ENCODE measurements at regions of chr4 and their contacts with region 1.

Region 1: DNA sequence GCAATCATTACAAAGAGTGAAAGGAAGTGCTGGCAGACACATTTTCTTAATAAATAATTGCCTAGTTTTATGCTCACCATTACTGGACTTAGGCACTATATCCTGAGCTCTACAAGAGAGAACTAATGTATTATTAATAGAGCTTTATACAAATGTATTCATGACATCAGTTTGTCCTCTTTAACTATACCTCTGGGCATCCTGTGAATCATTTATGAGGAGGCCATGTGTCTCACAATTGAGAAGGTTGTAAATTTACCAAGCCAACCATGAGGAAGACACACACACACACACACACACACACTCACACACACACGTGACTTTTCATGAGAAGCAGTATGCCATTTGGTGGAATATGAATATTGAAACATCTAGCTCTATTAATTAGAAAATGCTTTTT is 728.2 kb downstream of the ARAP2 start:
- DNase-seq: no peak
- H3K4me3 ChIP-seq: no peak overlapping the region
- CTCF ChIP-seq: no peak
- POLR2A ChIP-seq: no peak

Region 2: DNA sequence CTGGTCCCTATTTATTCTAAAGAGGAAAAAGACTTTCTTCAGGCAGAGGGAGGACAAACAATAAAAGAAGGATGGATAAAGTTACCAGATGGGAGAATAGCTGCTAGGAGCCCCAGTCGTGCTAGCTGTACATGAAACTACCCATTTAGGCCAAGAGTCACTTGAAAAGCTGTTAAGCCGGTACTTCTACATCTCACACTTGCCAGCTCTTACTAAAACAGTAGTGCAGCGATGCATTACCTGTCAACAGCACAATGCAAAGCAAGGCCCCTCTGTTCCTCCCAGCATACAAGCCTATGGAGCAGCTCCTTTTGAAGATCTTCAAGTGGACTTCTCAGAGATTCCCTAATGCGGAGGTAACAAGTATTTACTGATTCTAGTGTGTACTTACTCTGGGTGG is 410.6 kb before region 1 on chr4:
- intact Hi-C with region 1: no loop called
- DNase-seq: no peak
- H3K4me3 ChIP-seq: no peak overlapping the region
- CTCF ChIP-seq: no peak
- POLR2A ChIP-seq: no peak

Region 3: DNA sequence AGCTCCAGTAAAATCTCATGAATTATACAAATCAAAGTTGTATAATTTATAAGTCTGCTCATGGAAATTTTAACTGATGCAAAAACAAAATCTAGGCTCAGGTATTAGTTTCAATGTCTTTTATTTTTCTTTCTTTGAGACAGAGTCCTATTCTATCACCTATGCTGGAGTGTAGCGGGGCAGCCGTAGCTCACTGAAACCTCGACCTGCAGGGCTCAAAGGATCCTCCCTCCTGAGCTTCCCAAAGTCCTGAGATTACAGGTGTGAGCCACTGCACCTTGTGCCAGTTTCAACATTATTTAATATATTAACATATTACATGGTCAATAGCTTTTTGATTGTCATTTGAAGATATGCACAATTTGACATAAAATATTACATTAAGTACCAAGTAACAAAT is 49.5 kb after region 1 on chr4:
- intact Hi-C with region 1: loop called (anchors 5 kb)
- DNase-seq: no peak
- H3K4me3 ChIP-seq: no peak overlapping the region
- CTCF ChIP-seq: no peak
- POLR2A ChIP-seq: no peak